A673 (cell line): ENCODE measurements at regions of chr4 and their contacts with region 1.

Region 1: DNA sequence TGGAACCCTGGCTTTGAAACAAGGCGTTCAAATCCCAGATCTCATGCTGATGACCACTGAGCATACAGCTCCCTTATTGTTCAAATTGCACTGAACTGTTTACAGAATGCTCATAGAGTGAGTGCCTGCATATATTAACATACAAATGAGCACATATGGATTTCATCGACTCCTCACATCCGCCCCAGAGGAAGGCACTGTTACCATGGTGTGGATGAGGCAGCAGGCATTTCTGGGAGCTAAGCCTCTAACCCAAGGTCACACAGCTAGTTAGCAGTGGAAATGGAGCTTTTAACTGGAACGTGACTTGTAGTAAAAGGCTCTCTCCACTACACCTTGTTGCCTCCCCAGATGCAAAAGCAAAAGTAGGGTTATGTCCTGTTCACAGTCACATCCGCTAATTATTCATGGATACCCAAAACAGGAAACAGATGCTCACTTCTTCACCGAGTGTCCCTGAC is 289.7 kb downstream of the STK32B start:
- DNase-seq: peak; percentile 90
- H3K4me3 ChIP-seq: no peak overlapping the region
- H3K27ac ChIP-seq: peak overlapping the region; percentile 52
- H3K4me1 ChIP-seq: peaks cover 27% of the 10 kb centered on the region
- H3K27me3 ChIP-seq: no peaks in the 10 kb centered on the region
- CTCF ChIP-seq: no peak

Region 2: GRCh38 chr4:5206016-5206790 is 134.8 kb before region 1 on chr4:
- CTCF ChIA-PET with region 1: no interaction called
- POLR2A ChIA-PET with region 1: no interaction called
- intact Hi-C with region 1: loop called (anchors 5 kb)
- DNase-seq: peak; percentile 94
- H3K4me3 ChIP-seq: no peak overlapping the region
- H3K27ac ChIP-seq: peak overlapping the region; percentile 90
- H3K4me1 ChIP-seq: peaks cover 37% of the 10 kb centered on the region
- H3K27me3 ChIP-seq: no peaks in the 10 kb centered on the region
- CTCF ChIP-seq: no peak